Aorta (tissue), 5 donors: ENCODE measurements at regions of chr2 and their contacts with region 1.

Region 1: GRCh38 chr2:42928692-42929545 is 136.5 kb upstream of the HAAO start:
- DNase-seq: peak; percentile 21 to 72
- ATAC-seq: no peak
- H3K4me3 ChIP-seq: no peak overlapping the region
- H3K27ac ChIP-seq: peak overlapping the region; percentile 53 to 71
- H3K4me1 ChIP-seq: peaks cover 0 to 5% of the 10 kb centered on the region in 2 donors
- H3K27me3 ChIP-seq: no peaks in the 10 kb centered on the region

Region 2: GRCh38 chr2:42859006-42859552 is 69.8 kb before region 1 on chr2:
- intact Hi-C with region 1: loop called in 1 of 2 experiments (anchors 2 kb)
- DNase-seq: no peak
- ATAC-seq: no peak
- H3K4me3 ChIP-seq: no peak overlapping the region
- H3K27ac ChIP-seq: no peak overlapping the region
- H3K4me1 ChIP-seq: no peaks in the 10 kb centered on the region
- H3K27me3 ChIP-seq: no peaks in the 10 kb centered on the region

Region 3: DNA sequence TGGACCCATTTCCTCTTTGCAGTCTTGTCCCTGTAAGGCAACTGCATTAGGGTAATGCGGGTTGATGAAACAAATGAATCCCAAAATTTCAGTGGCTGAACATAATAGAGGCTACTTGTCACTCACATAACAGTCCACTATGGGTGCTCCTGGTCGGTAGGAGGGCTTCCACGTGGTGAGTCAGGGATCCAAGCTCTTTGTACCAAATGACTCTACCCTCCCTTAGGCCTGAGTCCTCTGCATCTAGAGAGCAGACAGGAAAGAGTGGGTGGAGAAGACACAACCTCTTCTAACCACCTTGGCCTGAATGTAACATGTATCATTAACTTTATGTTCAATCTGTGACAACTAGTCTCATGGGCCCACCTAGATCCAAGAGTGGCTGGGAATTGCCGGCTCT is 50.3 kb before region 1 on chr2:
- intact Hi-C with region 1: loop called in 1 of 2 experiments (anchors 5 kb)
- DNase-seq: no peak
- ATAC-seq: no peak
- H3K4me3 ChIP-seq: no peak overlapping the region
- H3K27ac ChIP-seq: no peak overlapping the region
- H3K4me1 ChIP-seq: peaks cover 0 to 2% of the 10 kb centered on the region in 2 donors
- H3K27me3 ChIP-seq: no peaks in the 10 kb centered on the region

Region 4: DNA sequence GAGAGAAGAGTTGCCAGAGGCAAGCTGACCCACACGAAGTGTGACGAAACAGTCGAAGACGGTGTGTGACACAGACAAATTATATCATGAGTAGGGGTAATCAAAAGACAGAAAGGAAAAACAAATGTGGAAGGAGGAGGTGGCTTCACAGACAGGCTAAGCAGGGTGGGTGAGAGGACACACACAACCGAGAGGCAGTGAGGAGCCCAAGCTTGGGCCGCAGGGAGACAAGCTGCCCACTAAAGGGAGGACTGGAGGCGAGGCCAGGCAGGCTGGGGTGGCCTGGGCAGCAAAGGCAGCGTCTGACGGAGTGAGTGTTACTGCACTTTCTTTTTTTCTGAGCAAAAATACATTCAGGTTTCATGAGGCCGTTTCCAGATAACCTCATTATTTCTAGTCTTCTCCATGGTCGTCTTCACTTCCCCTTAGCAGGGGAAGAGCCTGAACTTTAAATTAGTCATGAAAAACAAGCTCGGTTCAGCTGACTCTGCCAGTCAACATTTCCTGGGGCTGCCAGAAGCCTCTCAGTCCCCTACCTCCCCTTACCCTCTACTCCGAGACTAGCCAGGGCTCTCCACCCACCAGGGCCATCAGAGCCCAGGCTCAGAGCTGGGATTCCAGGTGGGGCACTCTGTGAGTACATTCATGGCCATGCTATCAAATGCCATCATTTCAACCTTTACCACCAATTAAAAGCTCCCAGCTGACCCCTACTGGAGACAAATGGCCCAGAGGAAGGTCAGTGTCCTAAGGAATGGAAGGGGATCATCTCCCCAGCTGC is 311.3 kb after region 1 on chr2:
- intact Hi-C with region 1: no loop called
- DNase-seq: no peak
- ATAC-seq: no peak
- H3K4me3 ChIP-seq: no peak overlapping the region
- H3K27ac ChIP-seq: no peak overlapping the region
- H3K4me1 ChIP-seq: no peaks in the 10 kb centered on the region
- H3K27me3 ChIP-seq: no peaks in the 10 kb centered on the region